Naive thymus-derived CD4-positive, alpha-beta T cell (primary cell): ENCODE measurements at regions of chr4 and their contacts with region 1.

Region 1: GRCh38 chr4:113547487-113548042 is 214.0 kb downstream of the CAMK2D start:
- DNase-seq: peak; percentile 59 to 89 (median 85)
- ATAC-seq: peak; percentile 100
- H3K4me3 ChIP-seq: no peak overlapping the region
- H3K4me3 Mint-ChIP-seq: peak overlapping the region in 1 of 10 donors; percentile 39
- H3K27ac ChIP-seq: peak overlapping the region; percentile 37
- H3K27ac Mint-ChIP-seq: peak overlapping the region; percentile 18 to 85 (median 73)
- H3K4me1 ChIP-seq: peaks cover 4 to 8% of the 10 kb centered on the region in 2 donors
- H3K4me1 Mint-ChIP-seq: peaks cover 4 to 22% (median 15%) of the 10 kb centered on the region in 7 donors
- H3K27me3 ChIP-seq: no peaks in the 10 kb centered on the region
- H3K27me3 Mint-ChIP-seq: no peaks in the 10 kb centered on the region

Region 2: GRCh38 chr4:113566015-113566795 is 18.6 kb after region 1 on chr4:
- CTCF ChIA-PET with region 1: interaction called, 6 read pairs
- POLR2A ChIA-PET with region 1: no interaction called
- intact Hi-C with region 1: loop called in 1 of 2 experiments (anchors 1 kb)
- DNase-seq: no peak
- ATAC-seq: no peak
- H3K4me3 ChIP-seq: no peak overlapping the region
- H3K4me3 Mint-ChIP-seq: peak overlapping the region in 6 of 10 donors; percentile 3 to 31 (median 14)
- H3K27ac ChIP-seq: no peak overlapping the region
- H3K27ac Mint-ChIP-seq: peak overlapping the region in 6 of 9 donors; percentile 1 to 49 (median 15)
- H3K4me1 ChIP-seq: peaks cover 18 to 22% of the 10 kb centered on the region in 2 donors
- H3K4me1 Mint-ChIP-seq: peaks cover 29 to 66% (median 49%) of the 10 kb centered on the region in 7 donors
- H3K27me3 ChIP-seq: no peaks in the 10 kb centered on the region
- H3K27me3 Mint-ChIP-seq: no peaks in the 10 kb centered on the region

Region 3: GRCh38 chr4:113684534-113685091 is 137.0 kb after region 1 on chr4:
- CTCF ChIA-PET with region 1: no interaction called
- POLR2A ChIA-PET with region 1: no interaction called
- intact Hi-C with region 1: loop called (anchors 1 to 2 kb)
- DNase-seq: peak in 1 of 9 donors; percentile 28
- ATAC-seq: no peak
- H3K4me3 ChIP-seq: no peak overlapping the region
- H3K4me3 Mint-ChIP-seq: peak overlapping the region in 7 of 10 donors; percentile 3 to 83 (median 73)
- H3K27ac ChIP-seq: peak overlapping the region; percentile 50
- H3K27ac Mint-ChIP-seq: peak overlapping the region; percentile 81 to 93 (median 90)
- H3K4me1 ChIP-seq: peaks cover 27 to 30% of the 10 kb centered on the region in 2 donors
- H3K4me1 Mint-ChIP-seq: peaks cover 20 to 66% (median 62%) of the 10 kb centered on the region in 7 donors
- H3K27me3 ChIP-seq: no peaks in the 10 kb centered on the region
- H3K27me3 Mint-ChIP-seq: no peaks in the 10 kb centered on the region

Region 4: DNA sequence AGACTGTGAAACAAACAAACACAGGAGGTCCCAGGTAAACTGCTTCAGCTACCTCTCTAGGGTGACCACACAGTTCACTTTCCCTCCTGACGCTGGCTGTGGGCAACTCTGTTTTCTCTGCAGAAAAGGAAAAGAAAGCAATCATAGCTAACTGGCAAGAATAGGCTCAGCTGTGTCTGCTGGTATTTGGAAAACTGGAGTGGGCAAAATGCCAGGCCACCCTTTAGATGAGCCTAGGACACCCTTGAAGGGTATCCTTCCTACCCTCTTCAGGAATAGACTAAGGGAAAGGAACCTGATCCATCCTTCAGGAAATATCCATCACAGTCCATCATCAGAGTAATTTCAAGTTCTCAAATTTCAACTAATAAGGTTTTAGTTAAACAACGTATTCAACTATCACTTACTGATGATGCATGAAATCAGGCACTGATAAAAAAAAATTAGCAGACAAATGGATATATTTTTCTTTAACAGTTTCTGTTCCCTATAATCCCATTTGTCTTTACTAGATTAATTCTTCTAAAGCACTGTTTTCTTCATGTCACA is 153.1 kb after region 1 on chr4:
- CTCF ChIA-PET with region 1: no interaction called
- POLR2A ChIA-PET with region 1: no interaction called
- intact Hi-C with region 1: no loop called
- DNase-seq: no peak
- ATAC-seq: no peak
- H3K4me3 ChIP-seq: no peak overlapping the region
- H3K4me3 Mint-ChIP-seq: no peak overlapping the region
- H3K27ac ChIP-seq: no peak overlapping the region
- H3K27ac Mint-ChIP-seq: no peak overlapping the region
- H3K4me1 ChIP-seq: no peaks in the 10 kb centered on the region
- H3K4me1 Mint-ChIP-seq: peaks cover 6 to 42% (median 22%) of the 10 kb centered on the region in 7 donors
- H3K27me3 ChIP-seq: no peaks in the 10 kb centered on the region
- H3K27me3 Mint-ChIP-seq: no peaks in the 10 kb centered on the region

Region 5: GRCh38 chr4:113901994-113902787 is 354.6 kb after region 1 on chr4:
- CTCF ChIA-PET with region 1: interaction called, 6 read pairs
- POLR2A ChIA-PET with region 1: no interaction called
- intact Hi-C with region 1: loop called in 1 of 2 experiments (anchors 2 kb)
- DNase-seq: peak; percentile 27 to 86 (median 72)
- ATAC-seq: peak; percentile 88
- H3K4me3 ChIP-seq: peak overlapping the region; percentile 7
- H3K4me3 Mint-ChIP-seq: peak overlapping the region; percentile 32 to 78 (median 70)
- H3K27ac ChIP-seq: peak overlapping the region; percentile 65
- H3K27ac Mint-ChIP-seq: peak overlapping the region; percentile 74 to 99 (median 96)
- H3K4me1 ChIP-seq: peaks cover 65 to 72% of the 10 kb centered on the region in 2 donors
- H3K4me1 Mint-ChIP-seq: peaks cover 23 to 87% (median 82%) of the 10 kb centered on the region in 7 donors
- H3K27me3 ChIP-seq: no peaks in the 10 kb centered on the region
- H3K27me3 Mint-ChIP-seq: no peaks in the 10 kb centered on the region

Region 6: GRCh38 chr4:114386637-114387233 is 839.2 kb after region 1 on chr4:
- CTCF ChIA-PET with region 1: interaction called, 3 read pairs
- POLR2A ChIA-PET with region 1: no interaction called
- intact Hi-C with region 1: loop called in 1 of 2 experiments (anchors 1 kb)
- DNase-seq: peak in 2 of 9 donors; percentile 10 to 11
- ATAC-seq: no peak
- H3K4me3 ChIP-seq: no peak overlapping the region
- H3K4me3 Mint-ChIP-seq: no peak overlapping the region
- H3K27ac ChIP-seq: no peak overlapping the region
- H3K27ac Mint-ChIP-seq: no peak overlapping the region
- H3K4me1 ChIP-seq: no peaks in the 10 kb centered on the region
- H3K4me1 Mint-ChIP-seq: peaks cover 0 to 2% (median 0%) of the 10 kb centered on the region in 7 donors
- H3K27me3 ChIP-seq: no peaks in the 10 kb centered on the region
- H3K27me3 Mint-ChIP-seq: peaks cover 0 to 17% (median 14%) of the 10 kb centered on the region in 5 donors